GM12878 (cell line): ENCODE measurements at regions of chr9 and their contacts with region 1.

Region 1: DNA sequence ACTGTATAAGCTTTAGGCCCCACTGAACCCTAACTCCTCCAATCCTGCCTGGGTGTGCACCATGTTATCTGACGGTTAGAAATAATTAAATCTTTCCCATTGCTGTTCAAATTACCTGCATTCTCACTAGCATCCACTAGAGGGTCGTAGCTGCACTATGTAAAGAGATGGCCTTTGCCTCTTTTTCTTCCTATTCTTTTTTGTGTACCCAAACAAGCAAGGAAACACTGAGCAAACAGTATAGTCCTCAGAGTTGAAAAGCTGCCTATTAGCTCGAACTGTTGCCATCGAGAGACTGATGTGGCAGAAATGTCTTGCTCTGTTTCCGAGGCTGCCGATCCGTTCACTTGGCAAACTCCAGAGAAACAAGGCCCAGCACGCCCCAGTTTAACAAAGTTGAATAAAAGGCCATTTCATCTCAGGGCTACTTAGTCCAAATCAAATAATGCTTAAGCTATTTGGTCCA is 163.8 kb upstream of the TRPM3 start:
- DNase-seq: no peak
- ATAC-seq: peak; percentile 94
- H3K4me3 ChIP-seq: no peak overlapping the region
- H3K27ac ChIP-seq: no peak overlapping the region
- H3K4me1 ChIP-seq: no peaks in the 10 kb centered on the region
- H3K27me3 ChIP-seq: no peaks in the 10 kb centered on the region
- CTCF ChIP-seq: peak; percentile 84 to 93 (median 90)
- EP300 ChIP-seq: no peak
- POLR2A ChIP-seq: no peak
- RAD21 ChIP-seq: peak; percentile 97

Region 2: GRCh38 chr9:71072587-71072986 is 212.6 kb before region 1 on chr9:
- CTCF ChIA-PET with region 1: no interaction called
- POLR2A ChIA-PET with region 1: no interaction called
- RAD21 ChIA-PET with region 1: no interaction called
- SMC1A ChIA-PET with region 1: no interaction called
- in situ Hi-C with region 1: no loop called
- intact Hi-C with region 1: no loop called
- DNase-seq: no peak
- ATAC-seq: no peak
- H3K4me3 ChIP-seq: no peak overlapping the region
- H3K27ac ChIP-seq: no peak overlapping the region
- H3K4me1 ChIP-seq: no peaks in the 10 kb centered on the region
- H3K27me3 ChIP-seq: no peaks in the 10 kb centered on the region
- CTCF ChIP-seq: no peak
- EP300 ChIP-seq: no peak
- POLR2A ChIP-seq: no peak
- RAD21 ChIP-seq: no peak

Region 3: GRCh38 chr9:71218774-71219173 is 66.5 kb before region 1 on chr9:
- CTCF ChIA-PET with region 1: no interaction called
- POLR2A ChIA-PET with region 1: no interaction called
- RAD21 ChIA-PET with region 1: no interaction called
- SMC1A ChIA-PET with region 1: no interaction called
- in situ Hi-C with region 1: no loop called
- intact Hi-C with region 1: no loop called
- DNase-seq: no peak
- ATAC-seq: no peak
- H3K4me3 ChIP-seq: no peak overlapping the region
- H3K27ac ChIP-seq: no peak overlapping the region
- H3K4me1 ChIP-seq: no peaks in the 10 kb centered on the region
- H3K27me3 ChIP-seq: no peaks in the 10 kb centered on the region
- CTCF ChIP-seq: no peak
- EP300 ChIP-seq: no peak
- POLR2A ChIP-seq: no peak
- RAD21 ChIP-seq: no peak

Region 4: DNA sequence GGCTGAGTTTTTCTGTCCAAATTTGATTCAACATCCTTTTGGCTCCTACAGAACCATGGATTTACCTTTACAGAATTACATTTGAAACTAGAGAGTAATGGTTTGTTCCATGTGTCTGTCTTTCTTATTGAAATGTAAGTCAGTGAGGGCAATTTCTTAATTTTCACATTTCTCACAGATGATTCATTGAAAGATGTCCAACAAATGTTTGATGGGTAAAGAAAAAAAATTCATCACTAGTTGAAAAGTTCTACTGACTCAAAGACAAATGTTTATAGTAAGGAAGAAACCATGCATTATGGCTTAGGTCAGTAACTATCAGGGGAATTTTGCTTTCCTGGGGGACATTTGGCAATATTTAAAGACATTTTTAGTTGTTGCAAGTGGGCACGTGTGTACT is 32.2 kb before region 1 on chr9:
- CTCF ChIA-PET with region 1: no interaction called
- POLR2A ChIA-PET with region 1: no interaction called
- RAD21 ChIA-PET with region 1: no interaction called
- SMC1A ChIA-PET with region 1: no interaction called
- in situ Hi-C with region 1: no loop called
- intact Hi-C with region 1: no loop called
- DNase-seq: no peak
- ATAC-seq: no peak
- H3K4me3 ChIP-seq: no peak overlapping the region
- H3K27ac ChIP-seq: no peak overlapping the region
- H3K4me1 ChIP-seq: no peaks in the 10 kb centered on the region
- H3K27me3 ChIP-seq: no peaks in the 10 kb centered on the region
- CTCF ChIP-seq: no peak
- EP300 ChIP-seq: no peak
- POLR2A ChIP-seq: no peak
- RAD21 ChIP-seq: no peak

Region 5: DNA sequence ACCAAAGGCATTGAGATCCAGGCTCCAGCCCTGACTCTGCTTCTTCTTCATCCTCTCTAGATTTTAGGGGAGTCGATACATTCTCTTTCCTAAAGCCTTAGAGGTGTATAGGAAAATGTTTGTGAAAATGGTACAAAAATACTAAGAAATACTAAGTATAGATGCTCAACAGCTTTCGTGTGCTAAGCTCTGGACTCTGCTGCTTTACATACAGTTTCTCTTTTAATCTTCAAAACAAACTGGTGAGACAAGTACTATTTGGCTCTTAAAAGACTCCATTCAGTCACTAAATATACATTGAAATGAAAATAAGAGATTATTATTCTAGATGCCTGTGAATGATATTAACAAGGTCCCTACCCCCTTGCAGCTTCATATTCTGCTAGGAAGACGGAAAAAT is 10.7 kb after region 1 on chr9:
- CTCF ChIA-PET with region 1: interaction called, 21 read pairs
- POLR2A ChIA-PET with region 1: no interaction called
- RAD21 ChIA-PET with region 1: no interaction called
- SMC1A ChIA-PET with region 1: interaction called, 9 read pairs
- in situ Hi-C with region 1: no loop called
- intact Hi-C with region 1: no loop called
- DNase-seq: no peak
- ATAC-seq: no peak
- H3K4me3 ChIP-seq: no peak overlapping the region
- H3K27ac ChIP-seq: no peak overlapping the region
- H3K4me1 ChIP-seq: no peaks in the 10 kb centered on the region
- H3K27me3 ChIP-seq: no peaks in the 10 kb centered on the region
- CTCF ChIP-seq: no peak
- EP300 ChIP-seq: no peak
- POLR2A ChIP-seq: no peak
- RAD21 ChIP-seq: no peak

Region 6: GRCh38 chr9:71302776-71303175 is 17.6 kb after region 1 on chr9:
- CTCF ChIA-PET with region 1: interaction called, 16 read pairs
- POLR2A ChIA-PET with region 1: no interaction called
- RAD21 ChIA-PET with region 1: interaction called, 5 read pairs
- SMC1A ChIA-PET with region 1: interaction called, 15 read pairs
- in situ Hi-C with region 1: no loop called
- intact Hi-C with region 1: no loop called
- DNase-seq: no peak
- ATAC-seq: peak; percentile 92
- H3K4me3 ChIP-seq: no peak overlapping the region
- H3K27ac ChIP-seq: no peak overlapping the region
- H3K4me1 ChIP-seq: no peaks in the 10 kb centered on the region; the same call in 1 of the 2 replicates
- H3K27me3 ChIP-seq: no peaks in the 10 kb centered on the region
- CTCF ChIP-seq: no peak
- EP300 ChIP-seq: no peak
- POLR2A ChIP-seq: no peak
- RAD21 ChIP-seq: no peak

Region 7: GRCh38 chr9:71479621-71480020 is 194.4 kb after region 1 on chr9:
- CTCF ChIA-PET with region 1: interaction called, 3 read pairs
- POLR2A ChIA-PET with region 1: no interaction called
- RAD21 ChIA-PET with region 1: interaction called, 4 read pairs
- SMC1A ChIA-PET with region 1: no interaction called
- in situ Hi-C with region 1: no loop called
- intact Hi-C with region 1: loop called (anchors 10 kb)
- DNase-seq: no peak
- ATAC-seq: no peak
- H3K4me3 ChIP-seq: no peak overlapping the region
- H3K27ac ChIP-seq: no peak overlapping the region
- H3K4me1 ChIP-seq: no peaks in the 10 kb centered on the region
- H3K27me3 ChIP-seq: no peaks in the 10 kb centered on the region
- CTCF ChIP-seq: no peak
- EP300 ChIP-seq: no peak
- POLR2A ChIP-seq: no peak
- RAD21 ChIP-seq: no peak

Region 8: DNA sequence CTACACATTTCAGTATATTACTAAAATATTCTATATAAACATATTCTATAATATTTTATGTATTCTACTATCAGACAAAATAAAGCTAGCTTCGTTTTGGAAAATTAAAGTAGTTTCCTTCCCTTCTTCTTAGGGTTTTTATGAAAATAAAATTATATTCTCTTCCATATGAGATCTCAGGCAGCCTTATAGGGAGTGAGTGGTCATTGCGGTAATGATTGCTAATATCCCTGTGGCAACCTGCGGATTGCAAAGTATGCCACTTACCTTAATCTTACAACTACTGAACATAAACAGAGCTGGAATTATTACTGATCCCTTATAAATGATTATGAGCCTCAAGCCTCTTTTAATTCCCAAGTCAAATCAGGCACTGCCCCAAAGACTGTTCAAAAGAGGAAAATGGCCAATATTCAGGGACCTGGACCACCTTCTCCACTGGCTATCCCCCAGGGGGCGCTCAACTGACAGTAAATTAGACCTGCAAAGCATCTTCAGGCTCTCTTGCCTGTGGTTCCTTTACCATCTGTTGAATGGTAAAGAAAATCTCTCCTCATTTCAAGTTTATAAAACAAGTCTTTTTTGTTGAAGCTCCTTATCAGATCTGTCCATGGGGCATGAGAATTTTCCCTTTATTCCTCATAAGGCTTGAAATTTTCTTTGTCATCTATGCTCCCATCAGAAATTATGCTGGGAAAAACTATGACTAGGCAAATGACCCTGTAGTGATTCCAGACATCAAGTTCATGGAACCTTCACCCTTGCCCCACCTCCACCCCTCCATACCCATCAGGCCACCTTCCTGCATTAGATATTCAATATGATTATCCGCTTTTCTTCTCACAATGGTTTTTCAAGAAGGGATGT is 319.2 kb after region 1 on chr9:
- CTCF ChIA-PET with region 1: interaction called, 22 read pairs
- POLR2A ChIA-PET with region 1: no interaction called
- RAD21 ChIA-PET with region 1: no interaction called
- SMC1A ChIA-PET with region 1: interaction called, 5 read pairs
- in situ Hi-C with region 1: no loop called
- intact Hi-C with region 1: loop called (anchors 1 kb)
- DNase-seq: no peak
- ATAC-seq: peak; percentile 93
- H3K4me3 ChIP-seq: no peak overlapping the region
- H3K27ac ChIP-seq: no peak overlapping the region
- H3K4me1 ChIP-seq: no peaks in the 10 kb centered on the region
- H3K27me3 ChIP-seq: no peaks in the 10 kb centered on the region
- CTCF ChIP-seq: peak; percentile 60 to 74 (median 62)
- EP300 ChIP-seq: no peak
- POLR2A ChIP-seq: no peak
- RAD21 ChIP-seq: peak; percentile 75